ENCODE measurements at regions of chr2 and their contacts with region 1.

Region 1: GRCh38 chr2:19358242-19359020 is at the start of gene OSR1:
- H3K4me3 ChIP-seq: peak within 1 kb of the TSS; percentile 46
- H3K27ac ChIP-seq: peak within 1 kb of the TSS; percentile 77; the same call in 1 of the 2 replicates
- H3K4me1 ChIP-seq: peaks cover 12% of the 10 kb centered on the region
- CTCF ChIP-seq: no peak; the same call in 1 of the 2 replicates

Region 2: GRCh38 chr2:18749912-18750526 is 608.4 kb before region 1 on chr2:
- CTCF ChIA-PET with region 1: interaction called, 22 read pairs
- POLR2A ChIA-PET with region 1: interaction called, 7 read pairs
- H3K4me3 ChIP-seq: no peak overlapping the region
- H3K27ac ChIP-seq: no peak overlapping the region
- H3K4me1 ChIP-seq: peaks cover 26% of the 10 kb centered on the region
- CTCF ChIP-seq: peak; percentile 33; the same call in 1 of the 2 replicates

Region 3: DNA sequence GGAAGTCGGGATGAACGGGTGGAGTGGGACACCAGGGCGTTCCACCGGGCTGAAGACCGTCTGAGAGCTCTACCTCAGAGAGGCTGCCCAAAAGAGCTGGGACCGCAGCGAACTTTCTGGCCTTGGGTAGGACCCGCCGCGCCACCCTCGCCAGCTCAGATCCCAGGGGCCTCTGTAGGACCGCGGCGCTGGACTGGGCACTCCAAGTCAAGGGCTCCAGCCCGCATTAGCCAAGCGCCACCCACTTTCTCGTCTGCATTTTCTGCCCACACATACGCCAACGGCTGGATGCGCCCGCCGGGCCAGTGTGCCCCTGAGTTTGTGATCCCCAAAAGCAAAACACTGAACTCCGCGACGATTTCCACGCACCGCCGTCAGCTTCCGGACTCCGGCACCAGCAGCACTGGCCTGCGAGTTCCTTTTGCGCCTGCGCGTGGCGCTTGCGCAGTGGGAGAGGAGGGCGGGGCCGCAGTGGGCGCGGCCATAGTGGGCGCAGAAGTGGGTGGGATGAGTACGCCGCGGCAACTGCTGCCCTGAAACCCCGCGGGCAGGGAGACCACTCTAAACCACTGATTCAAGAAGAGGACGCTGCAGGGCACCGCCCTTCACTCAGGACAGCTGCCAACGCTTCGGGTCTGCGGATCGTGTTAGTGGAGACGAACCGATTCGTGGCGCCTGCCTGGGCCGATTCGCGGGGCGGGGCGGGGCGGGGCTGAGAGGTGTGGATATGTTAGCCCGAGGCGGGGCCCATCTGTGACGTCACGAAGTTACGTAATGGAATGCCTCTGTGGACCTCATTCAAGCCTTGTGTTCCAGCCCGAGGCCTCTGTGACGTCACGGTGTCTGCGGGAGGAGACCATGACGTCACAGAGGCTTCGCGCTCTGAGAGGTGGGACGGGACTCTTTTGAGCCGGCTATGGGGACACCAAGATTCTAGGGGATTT is 10.5 kb before region 1 on chr2:
- CTCF ChIA-PET with region 1: interaction called, 3 read pairs
- POLR2A ChIA-PET with region 1: interaction called, 30 read pairs
- H3K4me3 ChIP-seq: peak overlapping the region; percentile 98
- H3K27ac ChIP-seq: peak overlapping the region; percentile 80
- H3K4me1 ChIP-seq: no peaks in the 10 kb centered on the region
- CTCF ChIP-seq: peak; percentile 54